Activated CD4-positive, alpha-beta T cell treated with anti-CD3 and anti-CD28 coated beads, Interleukin-2, amount 10 ng/mL, durations not matched to agents 24 days and 14 days (primary cell): ENCODE measurements at regions of chr16 and their contacts with region 1.

Region 1: GRCh38 chr16:31386157-31386984 is 6.8 kb upstream of the ITGAD start:
- DNase-seq: peak; percentile 64
- H3K4me3 Mint-ChIP-seq: peak overlapping the region; percentile 6
- H3K27ac Mint-ChIP-seq: peak overlapping the region; percentile 77
- H3K4me1 Mint-ChIP-seq: peaks cover 30% of the 10 kb centered on the region
- H3K27me3 Mint-ChIP-seq: peaks cover 15% of the 10 kb centered on the region

Region 2: DNA sequence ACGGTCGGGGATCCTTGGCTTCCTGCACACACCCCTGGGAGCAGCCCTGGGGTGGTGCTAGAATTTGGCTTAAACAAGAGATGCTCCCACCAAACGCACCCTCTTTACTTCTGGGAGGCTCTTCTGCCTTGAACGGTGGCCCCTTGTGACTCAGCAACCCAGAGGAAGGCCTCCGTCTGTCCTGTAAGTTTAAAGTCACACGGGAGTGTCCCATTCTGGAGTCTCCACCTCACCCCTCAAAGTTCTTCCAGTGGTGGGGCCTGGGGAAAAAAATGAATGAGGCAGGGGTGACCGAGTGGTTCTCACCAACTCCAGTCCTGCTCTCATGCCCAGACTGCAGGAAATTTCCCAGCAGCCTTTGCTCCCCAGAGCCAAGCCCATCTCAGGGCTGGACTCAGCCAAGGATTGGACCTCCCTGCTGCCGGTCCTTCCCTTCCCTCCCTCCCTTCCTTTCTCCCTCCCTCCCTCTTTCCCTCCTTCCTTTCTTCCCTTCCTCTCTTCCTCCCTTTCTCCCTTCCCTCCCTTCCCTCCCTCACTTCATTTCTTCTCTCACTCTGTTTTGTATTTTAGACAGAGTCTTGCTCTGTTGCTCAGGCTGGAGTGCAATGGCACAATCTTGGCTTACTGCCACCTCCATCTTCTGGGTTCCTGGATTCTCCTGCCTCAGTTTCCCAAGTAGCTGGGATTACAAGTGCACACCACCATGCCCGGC is 18.1 kb after region 1 on chr16:
- intact Hi-C with region 1: no loop called
- DNase-seq: no peak
- H3K4me3 Mint-ChIP-seq: no peak overlapping the region
- H3K27ac Mint-ChIP-seq: no peak overlapping the region
- H3K4me1 Mint-ChIP-seq: peaks cover 8% of the 10 kb centered on the region
- H3K27me3 Mint-ChIP-seq: peaks cover 5% of the 10 kb centered on the region

Region 3: GRCh38 chr16:31421587-31421986 is 35.2 kb after region 1 on chr16:
- intact Hi-C with region 1: loop called (anchors 1 kb)
- DNase-seq: peak; percentile 87
- H3K4me3 Mint-ChIP-seq: peak overlapping the region; percentile 58
- H3K27ac Mint-ChIP-seq: peak overlapping the region; percentile 83
- H3K4me1 Mint-ChIP-seq: peaks cover 40% of the 10 kb centered on the region
- H3K27me3 Mint-ChIP-seq: no peaks in the 10 kb centered on the region

Region 4: GRCh38 chr16:31440516-31441184 is 54.3 kb after region 1 on chr16:
- intact Hi-C with region 1: loop called (anchors 1 kb)
- DNase-seq: no peak
- H3K4me3 Mint-ChIP-seq: no peak overlapping the region
- H3K27ac Mint-ChIP-seq: no peak overlapping the region
- H3K4me1 Mint-ChIP-seq: peaks cover 21% of the 10 kb centered on the region
- H3K27me3 Mint-ChIP-seq: peaks cover 5% of the 10 kb centered on the region